ENCODE measurements at regions of chr9 and their contacts with region 1.

Region 1: DNA sequence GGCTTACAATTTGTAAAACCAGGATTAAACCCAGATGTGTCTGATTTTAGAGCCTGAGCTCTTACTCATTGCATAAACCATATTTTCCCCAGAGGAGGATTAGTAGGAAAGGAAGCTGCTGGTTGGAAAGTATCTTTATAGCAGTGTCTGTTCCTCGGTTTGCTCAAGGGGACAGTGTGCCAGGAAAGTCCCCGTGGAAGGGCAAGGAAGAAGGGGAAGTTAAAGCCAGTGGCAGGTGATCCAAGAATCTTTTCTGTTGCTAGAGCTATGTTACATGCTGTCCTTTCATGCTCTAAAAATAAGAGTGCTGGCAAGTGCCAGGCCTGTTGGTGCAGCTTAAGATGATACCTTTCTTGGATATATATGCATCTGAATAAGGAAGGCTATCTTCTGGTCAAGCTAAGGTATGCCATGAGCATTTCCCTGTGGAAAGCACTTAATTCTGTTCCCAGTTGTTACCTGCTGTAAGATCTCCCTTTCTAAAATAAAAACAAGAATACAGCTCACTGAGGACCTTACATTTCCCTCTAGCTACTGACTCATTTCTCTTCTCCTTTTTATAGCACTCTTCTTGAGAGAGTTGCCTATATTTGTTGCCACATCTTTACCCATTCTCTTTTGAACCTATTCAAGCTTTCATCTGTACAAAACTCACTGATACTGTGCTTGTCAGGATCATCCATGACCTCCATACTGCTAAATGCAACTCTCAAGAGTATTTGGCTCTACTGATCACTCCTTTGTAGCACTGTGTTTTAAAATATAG is 8.0 kb downstream of the PDCD1LG2 start:
- DNase-seq: no peak
- ATAC-seq: peak; percentile 65

Region 2: DNA sequence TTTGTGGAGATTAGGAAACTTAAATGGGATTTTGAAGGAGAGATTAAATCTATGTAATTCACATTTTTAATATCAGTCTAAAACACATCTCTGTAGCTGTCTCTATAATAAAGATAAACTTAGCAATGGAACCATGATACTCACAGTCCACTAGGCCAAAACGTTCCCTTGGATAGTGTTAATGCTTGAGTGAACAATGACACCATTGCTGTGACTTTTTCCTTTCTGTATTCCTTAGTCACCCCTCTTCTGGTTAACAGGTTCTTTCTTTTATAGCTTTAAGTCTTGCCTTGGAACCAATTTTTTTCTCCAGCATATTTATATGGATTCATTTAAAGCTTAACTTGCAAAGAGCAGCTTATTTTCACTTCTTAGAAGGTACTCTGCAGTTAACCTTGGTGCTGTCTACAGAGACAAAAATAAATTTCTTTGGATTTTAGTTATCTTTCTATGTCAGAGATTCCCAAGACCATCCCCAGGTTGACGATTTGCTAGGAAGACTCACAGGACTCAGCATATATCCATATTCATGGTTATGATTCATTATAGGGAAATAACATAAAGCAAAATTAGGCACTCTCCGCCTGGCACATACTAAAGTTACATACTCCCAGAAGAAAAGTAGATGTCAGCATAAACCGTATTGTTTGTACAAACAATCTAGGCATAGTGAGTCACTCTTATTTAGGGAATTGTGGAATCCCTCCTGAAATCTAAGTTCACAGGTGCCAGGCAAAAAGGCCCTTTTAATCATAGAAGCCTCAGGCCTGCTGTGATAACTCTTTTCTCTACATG is 396.0 kb before region 1 on chr9:
- intact Hi-C with region 1: no loop called
- DNase-seq: no peak
- ATAC-seq: no peak

Region 3: DNA sequence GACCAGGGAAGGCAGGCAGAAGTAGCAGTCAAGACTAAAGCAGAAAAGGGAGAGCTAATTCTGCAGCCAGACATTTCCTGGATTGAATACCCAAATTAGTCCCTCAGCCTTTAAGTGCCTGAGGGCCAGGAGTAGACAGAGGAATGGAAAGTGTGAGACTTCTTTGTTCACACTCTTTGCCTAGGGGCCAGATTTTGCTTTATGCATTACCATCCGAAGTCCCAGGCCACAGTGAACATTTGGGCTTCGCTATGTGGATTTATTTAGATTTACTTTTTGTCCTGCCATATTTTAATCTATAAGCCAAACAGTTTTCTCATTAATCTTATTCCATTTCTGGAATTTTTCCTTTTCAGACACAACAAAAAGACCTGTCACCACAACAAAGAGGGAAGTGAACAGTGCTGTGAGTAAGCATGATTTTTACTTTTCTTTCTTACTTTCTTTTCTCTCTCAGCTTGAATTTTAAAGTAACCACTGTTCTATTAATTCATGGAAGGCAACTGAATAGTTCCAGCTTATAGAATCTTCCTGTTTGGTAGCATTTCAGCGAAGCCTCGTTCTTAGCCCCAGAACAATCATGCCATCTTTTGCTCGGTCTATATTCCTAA is 44.6 kb after region 1 on chr9:
- intact Hi-C with region 1: loop called (anchors 5 kb)
- DNase-seq: no peak
- ATAC-seq: no peak